Psoas muscle (tissue), 8 donors: ENCODE measurements at regions of chr9 and their contacts with region 1.

Region 1: DNA sequence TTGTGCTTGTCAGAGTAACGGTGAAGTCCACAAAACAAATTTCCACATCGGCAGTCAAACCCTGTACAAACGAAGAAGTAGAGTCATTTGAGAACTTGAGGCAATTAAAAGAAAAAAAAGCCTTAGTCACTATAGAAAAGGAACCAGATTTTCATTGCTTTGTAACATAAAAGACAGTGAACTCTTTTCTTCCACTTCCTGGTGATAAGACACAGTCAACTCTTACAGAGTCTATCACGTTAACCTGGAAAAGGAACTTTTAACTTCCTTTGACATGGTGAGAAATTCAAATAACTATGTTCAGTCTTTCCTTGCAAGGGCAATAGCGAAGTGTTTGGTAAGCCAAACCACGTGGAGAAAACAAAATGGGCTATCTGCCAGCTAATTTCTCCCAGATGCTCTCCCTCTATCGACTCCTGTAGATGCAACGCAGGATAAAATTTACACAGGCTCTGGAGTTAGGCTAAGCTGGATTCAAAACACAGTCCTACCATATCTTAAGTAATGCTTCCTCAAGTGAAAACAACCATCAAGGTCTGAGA is 8.9 kb downstream of the ZFAND5 start:
- DNase-seq: no peak
- ATAC-seq: peak in 1 of 4 donors; percentile 9
- H3K4me3 ChIP-seq: peak overlapping the region; percentile 84
- H3K27ac ChIP-seq: peak overlapping the region; percentile 99
- H3K4me1 ChIP-seq: peaks cover 85% of the 10 kb centered on the region
- H3K27me3 ChIP-seq: no peaks in the 10 kb centered on the region
- CTCF ChIP-seq: no peak

Region 2: DNA sequence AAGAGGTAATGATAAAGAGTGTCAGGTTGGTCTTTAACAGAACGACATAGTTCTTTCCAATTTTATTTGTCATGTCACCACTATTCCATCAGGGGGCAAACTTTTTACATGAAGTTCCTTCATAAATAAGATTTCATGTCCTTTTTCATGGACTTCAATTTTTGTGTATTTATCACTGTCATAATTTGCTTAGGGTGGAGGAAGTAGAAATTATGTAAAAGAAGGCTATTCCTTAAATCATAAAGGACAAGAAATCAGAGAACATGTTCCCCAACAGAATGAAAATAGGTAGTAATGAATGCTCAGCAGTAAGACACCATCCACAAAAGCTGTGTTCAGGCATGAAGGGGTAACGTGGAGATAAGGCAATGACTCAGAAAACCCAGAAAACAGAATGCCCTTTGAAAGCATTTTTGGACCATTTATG is 63.8 kb before region 1 on chr9:
- intact Hi-C with region 1: loop called in 1 of 2 experiments (anchors 10 kb)
- DNase-seq: no peak
- ATAC-seq: peak; percentile 43 to 80 (median 56)
- H3K4me3 ChIP-seq: no peak overlapping the region
- H3K27ac ChIP-seq: peak overlapping the region; percentile 31
- H3K4me1 ChIP-seq: peaks cover 9% of the 10 kb centered on the region
- H3K27me3 ChIP-seq: no peaks in the 10 kb centered on the region
- CTCF ChIP-seq: peak; percentile 67

Region 3: GRCh38 chr9:72315510-72316311 is 40.4 kb before region 1 on chr9:
- intact Hi-C with region 1: loop called in 1 of 2 experiments (anchors 5 kb)
- DNase-seq: peak; percentile 34 to 63
- ATAC-seq: peak; percentile 86 to 95 (median 88)
- H3K4me3 ChIP-seq: peak overlapping the region; percentile 51
- H3K27ac ChIP-seq: peak overlapping the region; percentile 87
- H3K4me1 ChIP-seq: peaks cover 34% of the 10 kb centered on the region
- H3K27me3 ChIP-seq: no peaks in the 10 kb centered on the region
- CTCF ChIP-seq: no peak

Region 4: DNA sequence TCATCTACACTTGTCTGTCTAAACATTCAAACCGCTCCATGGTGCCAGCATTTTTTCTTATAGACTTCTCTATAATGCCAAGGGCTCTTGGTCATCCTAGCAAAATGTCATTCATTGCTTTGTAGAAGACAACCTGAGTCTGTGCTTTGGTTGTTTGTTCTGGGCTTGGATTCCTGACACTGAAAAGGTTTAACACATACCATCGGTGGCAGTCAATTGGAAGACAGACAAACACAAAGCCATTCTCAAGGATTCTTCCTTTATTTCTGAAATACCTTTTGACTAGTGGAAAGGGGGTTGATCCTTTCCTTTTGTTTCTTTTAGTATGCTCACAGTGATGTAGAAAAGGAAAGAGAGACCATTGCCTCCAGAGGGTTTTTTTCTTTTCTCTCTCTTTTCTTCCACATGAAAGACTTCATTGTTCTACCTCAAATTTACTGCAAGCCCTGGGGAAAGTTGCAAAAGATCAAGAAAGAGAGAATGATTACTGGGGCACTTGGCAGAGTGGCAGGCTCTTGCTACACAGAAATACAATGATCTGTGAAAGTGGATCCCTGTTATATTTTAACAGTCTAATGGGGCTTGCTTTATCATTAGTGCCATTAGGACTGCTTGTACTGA is 98.9 kb after region 1 on chr9:
- intact Hi-C with region 1: no loop called
- DNase-seq: no peak
- ATAC-seq: no peak
- H3K4me3 ChIP-seq: no peak overlapping the region
- H3K27ac ChIP-seq: no peak overlapping the region
- H3K4me1 ChIP-seq: no peaks in the 10 kb centered on the region
- H3K27me3 ChIP-seq: no peaks in the 10 kb centered on the region
- CTCF ChIP-seq: no peak